Natural killer cell (primary cell): ENCODE measurements at regions of chr18 and their contacts with region 1.

Region 1: GRCh38 chr18:46213295-46213694 is 109.1 kb downstream of the HAUS1 start:
- DNase-seq: peak in 1 of 2 donors; percentile 61
- ATAC-seq: peak; percentile 65 to 73 (median 71)
- H3K4me3 ChIP-seq: no peak overlapping the region
- H3K4me3 Mint-ChIP-seq: peak overlapping the region; percentile 52
- H3K27ac ChIP-seq: no peak overlapping the region
- H3K27ac Mint-ChIP-seq: peak overlapping the region in 1 of 2 donors; percentile 63
- H3K4me1 ChIP-seq: peaks cover 12% of the 10 kb centered on the region
- H3K4me1 Mint-ChIP-seq: peaks cover 60 to 69% of the 10 kb centered on the region in 2 donors
- H3K27me3 ChIP-seq: no peaks in the 10 kb centered on the region
- H3K27me3 Mint-ChIP-seq: no peaks in the 10 kb centered on the region
- CTCF ChIP-seq: peak; percentile 71

Region 2: DNA sequence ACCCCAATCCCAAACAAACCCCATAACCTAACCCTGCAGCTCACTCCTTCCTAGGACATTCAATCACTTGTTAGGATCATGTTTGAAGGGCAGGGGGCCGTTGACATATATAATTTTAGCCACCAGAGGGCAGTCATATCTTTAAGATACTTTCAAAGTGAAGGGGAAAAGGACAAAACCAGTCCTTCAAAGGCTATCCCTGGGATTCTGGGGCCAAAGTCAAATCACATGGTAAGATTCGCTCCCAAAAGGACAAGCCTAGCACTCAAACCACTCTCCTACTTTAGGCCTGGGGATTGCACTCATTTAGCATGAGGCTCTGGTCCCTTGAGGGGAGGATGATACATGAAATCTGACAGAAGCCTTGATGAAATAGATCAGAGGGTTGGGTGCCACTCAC is 64.5 kb before region 1 on chr18:
- intact Hi-C with region 1: loop called (anchors 1 kb)
- DNase-seq: peak in 1 of 2 donors; percentile 73
- ATAC-seq: peak in 2 of 3 donors; percentile 58 to 66
- H3K4me3 ChIP-seq: no peak overlapping the region
- H3K4me3 Mint-ChIP-seq: no peak overlapping the region
- H3K27ac ChIP-seq: no peak overlapping the region
- H3K27ac Mint-ChIP-seq: peak overlapping the region in 1 of 2 donors; percentile 19
- H3K4me1 ChIP-seq: peaks cover 7% of the 10 kb centered on the region
- H3K4me1 Mint-ChIP-seq: peaks cover 4 to 22% of the 10 kb centered on the region in 2 donors
- H3K27me3 ChIP-seq: no peaks in the 10 kb centered on the region
- H3K27me3 Mint-ChIP-seq: no peaks in the 10 kb centered on the region
- CTCF ChIP-seq: peak; percentile 77

Region 3: GRCh38 chr18:46250084-46250811 is 37.0 kb after region 1 on chr18:
- intact Hi-C with region 1: loop called (anchors 5 kb)
- DNase-seq: peak; percentile 20 to 91
- ATAC-seq: peak; percentile 93 to 95 (median 94)
- H3K4me3 ChIP-seq: peak overlapping the region; percentile 11
- H3K4me3 Mint-ChIP-seq: peak overlapping the region; percentile 83
- H3K27ac ChIP-seq: peak overlapping the region; percentile 96
- H3K27ac Mint-ChIP-seq: peak overlapping the region; percentile 91 to 95
- H3K4me1 ChIP-seq: peaks cover 17% of the 10 kb centered on the region
- H3K4me1 Mint-ChIP-seq: peaks cover 34 to 35% of the 10 kb centered on the region in 2 donors
- H3K27me3 ChIP-seq: no peaks in the 10 kb centered on the region
- H3K27me3 Mint-ChIP-seq: no peaks in the 10 kb centered on the region
- CTCF ChIP-seq: no peak

Region 4: DNA sequence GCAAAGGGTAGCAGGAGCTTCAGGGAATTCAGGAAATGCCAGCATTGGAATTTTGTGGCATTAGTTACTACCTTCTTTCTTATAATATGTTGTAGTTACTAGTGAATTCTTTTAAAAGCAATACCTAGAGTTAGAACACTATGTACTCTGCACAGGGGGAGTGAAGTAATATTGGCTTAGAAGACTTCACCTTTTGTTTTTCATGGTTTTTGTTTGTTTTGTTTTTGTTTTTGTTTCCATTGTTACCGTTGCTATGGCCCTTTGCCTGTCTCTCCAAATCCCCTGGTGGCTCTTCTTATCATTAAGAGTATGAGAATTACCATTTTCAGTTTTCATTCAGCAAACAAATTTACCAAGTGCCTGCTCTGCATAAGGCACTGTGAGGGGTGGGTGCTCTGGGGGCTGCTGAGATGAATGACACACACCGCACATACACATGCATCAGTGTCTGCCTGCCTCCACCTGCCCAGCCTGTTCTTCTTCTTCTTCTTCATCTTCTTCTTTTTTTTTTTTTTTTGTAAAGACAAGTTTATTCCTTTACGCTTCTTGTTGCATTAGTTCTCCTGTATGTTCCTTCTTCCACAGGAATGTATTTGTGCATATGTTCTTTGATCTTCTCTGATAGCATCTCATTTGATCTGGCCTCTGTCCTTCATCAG is 51.1 kb after region 1 on chr18:
- intact Hi-C with region 1: no loop called
- DNase-seq: peak in 1 of 2 donors; percentile 54
- ATAC-seq: peak; percentile 30 to 78 (median 34)
- H3K4me3 ChIP-seq: no peak overlapping the region
- H3K4me3 Mint-ChIP-seq: no peak overlapping the region
- H3K27ac ChIP-seq: no peak overlapping the region
- H3K27ac Mint-ChIP-seq: peak overlapping the region in 1 of 2 donors; percentile 52
- H3K4me1 ChIP-seq: no peaks in the 10 kb centered on the region
- H3K4me1 Mint-ChIP-seq: peaks cover 46 to 62% of the 10 kb centered on the region in 2 donors
- H3K27me3 ChIP-seq: no peaks in the 10 kb centered on the region
- H3K27me3 Mint-ChIP-seq: no peaks in the 10 kb centered on the region
- CTCF ChIP-seq: no peak